ENCODE measurements at regions of chr16 and their contacts with region 1.

Region 1: GRCh38 chr16:68022704-68023522 is at the starts of genes DDX28 and DUS2:
- DNase-seq: peak; percentile 83 to 96 (median 85)
- ATAC-seq: peak; percentile 91
- H3K4me3 ChIP-seq: peak within 1 kb of the TSS; percentile 88
- H3K27ac ChIP-seq: peak within 1 kb of the TSS; percentile 78
- H3K4me1 ChIP-seq: peaks cover 8 to 23% of the 10 kb centered on the region in 2 experiments; a peak in 4 of 5 replicates
- H3K27me3 ChIP-seq: no peaks in the 10 kb centered on the region
- CTCF ChIP-seq: 0 out of 6 replicates have a peak, but pooled peaks of 1 of the 3 experiments have one; percentile 1
- EP300 ChIP-seq: no peak
- POLR2A ChIP-seq: peak; percentile 94
- RAD21 ChIP-seq: no peak; a peak in 1 of 4 replicates
- polyA plus RNA-seq, gene DDX28: 2.8 to 3.5 TPM
- polyA plus RNA-seq, gene DUS2: 5.8 to 9.3 TPM

Region 2: DNA sequence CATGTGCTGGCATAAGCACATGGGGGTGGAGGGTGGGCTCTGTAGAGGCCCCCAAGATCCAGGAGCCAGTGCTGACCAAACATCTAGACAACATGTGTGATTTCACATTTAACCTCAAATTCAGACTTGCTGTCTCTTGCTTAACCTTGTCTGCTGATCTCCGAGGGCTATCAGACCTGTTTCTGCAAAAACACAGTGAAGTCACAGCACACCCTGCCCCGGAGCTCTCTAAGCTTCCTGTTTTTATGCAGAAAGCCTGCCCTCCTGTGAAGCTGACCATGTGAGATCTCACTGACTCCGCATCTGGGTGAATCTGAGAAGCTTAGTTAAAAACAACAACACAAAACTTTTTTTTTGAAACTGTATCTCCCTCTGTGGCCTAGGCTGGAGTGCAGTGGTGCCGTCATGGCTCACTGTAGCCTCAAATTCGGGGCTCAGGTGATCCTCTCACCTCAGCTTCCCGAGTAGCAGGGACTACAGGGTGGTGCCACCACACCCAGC is 17.1 kb before region 1 on chr16:
- CTCF ChIA-PET with region 1: no interaction called
- POLR2A ChIA-PET with region 1: interaction called, 13 read pairs
- in situ Hi-C with region 1: no loop called
- intact Hi-C with region 1: no loop called
- DNase-seq: peak in 1 of 4 experiments; percentile 33
- ATAC-seq: peak; percentile 77
- H3K4me3 ChIP-seq: no peak overlapping the region
- H3K27ac ChIP-seq: peak overlapping the region; percentile 34; the same call in 1 of the 3 replicates
- H3K4me1 ChIP-seq: peaks cover 0 to 4% of the 10 kb centered on the region in 2 experiments; a peak in 2 of 5 replicates
- H3K27me3 ChIP-seq: no peaks in the 10 kb centered on the region
- CTCF ChIP-seq: no peak
- EP300 ChIP-seq: no peak
- POLR2A ChIP-seq: no peak
- RAD21 ChIP-seq: no peak

Region 3: DNA sequence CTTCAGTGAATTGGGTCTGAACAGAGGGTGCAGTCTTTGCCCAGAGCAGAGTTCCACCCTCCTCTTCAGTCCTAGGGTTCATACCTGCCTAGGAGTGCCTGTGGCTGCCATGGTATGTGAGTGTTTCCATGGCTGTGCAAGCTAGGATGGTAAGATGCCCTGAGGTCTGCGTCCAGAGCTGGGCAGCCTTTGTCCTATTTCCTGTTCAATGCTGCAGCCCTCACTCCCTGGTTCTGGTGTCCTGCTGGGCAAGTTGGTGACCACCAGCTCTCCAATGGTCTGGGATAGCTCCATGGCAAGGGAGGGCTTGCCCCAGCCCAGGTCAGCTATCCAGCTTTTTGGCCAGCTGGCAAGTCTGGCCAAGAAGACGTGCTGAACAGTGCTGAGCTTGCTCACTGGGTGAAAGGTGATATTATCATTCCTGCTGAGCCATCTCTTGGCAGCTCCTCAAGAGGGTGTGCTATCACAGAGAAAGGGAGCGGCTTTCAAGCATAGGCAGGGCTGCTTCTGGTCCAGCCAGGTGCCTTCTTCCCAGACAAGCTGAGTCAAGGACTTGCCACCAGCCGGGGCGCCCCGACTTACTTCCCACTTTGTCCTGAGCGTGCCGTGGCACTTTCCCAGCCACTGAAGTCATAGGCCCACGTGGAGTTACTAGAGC is 49.3 kb after region 1 on chr16:
- CTCF ChIA-PET with region 1: no interaction called
- POLR2A ChIA-PET with region 1: no interaction called
- in situ Hi-C with region 1: no loop called
- intact Hi-C with region 1: no loop called
- DNase-seq: peak; percentile 23 to 77 (median 50)
- ATAC-seq: peak; percentile 95
- H3K4me3 ChIP-seq: no peak overlapping the region
- H3K27ac ChIP-seq: no peak overlapping the region; the same call in 2 of the 3 replicates
- H3K4me1 ChIP-seq: peaks cover 9% of the 10 kb centered on the region in 2 experiments; a peak in 4 of 5 replicates
- H3K27me3 ChIP-seq: no peaks in the 10 kb centered on the region
- CTCF ChIP-seq: peak; percentile 38 to 68 (median 45); a peak in 5 of 6 replicates
- EP300 ChIP-seq: no peak
- POLR2A ChIP-seq: no peak
- RAD21 ChIP-seq: peak; percentile 62 to 78

Region 4: GRCh38 chr16:68237243-68238028 is 214.5 kb after region 1 on chr16:
- CTCF ChIA-PET with region 1: no interaction called
- POLR2A ChIA-PET with region 1: no interaction called
- in situ Hi-C with region 1: no loop called
- intact Hi-C with region 1: no loop called
- DNase-seq: peak in 2 of 4 experiments; percentile 37 to 58
- ATAC-seq: no peak
- H3K4me3 ChIP-seq: no peak overlapping the region
- H3K27ac ChIP-seq: no peak overlapping the region
- H3K4me1 ChIP-seq: peaks cover 0 to 8% of the 10 kb centered on the region in 2 experiments; a peak in 1 of 5 replicates
- H3K27me3 ChIP-seq: no peaks in the 10 kb centered on the region
- CTCF ChIP-seq: no peak
- EP300 ChIP-seq: no peak
- POLR2A ChIP-seq: no peak
- RAD21 ChIP-seq: no peak